Esophagus squamous epithelium (tissue), 5 donors: ENCODE measurements at regions of chr6 and their contacts with region 1.

Region 1: DNA sequence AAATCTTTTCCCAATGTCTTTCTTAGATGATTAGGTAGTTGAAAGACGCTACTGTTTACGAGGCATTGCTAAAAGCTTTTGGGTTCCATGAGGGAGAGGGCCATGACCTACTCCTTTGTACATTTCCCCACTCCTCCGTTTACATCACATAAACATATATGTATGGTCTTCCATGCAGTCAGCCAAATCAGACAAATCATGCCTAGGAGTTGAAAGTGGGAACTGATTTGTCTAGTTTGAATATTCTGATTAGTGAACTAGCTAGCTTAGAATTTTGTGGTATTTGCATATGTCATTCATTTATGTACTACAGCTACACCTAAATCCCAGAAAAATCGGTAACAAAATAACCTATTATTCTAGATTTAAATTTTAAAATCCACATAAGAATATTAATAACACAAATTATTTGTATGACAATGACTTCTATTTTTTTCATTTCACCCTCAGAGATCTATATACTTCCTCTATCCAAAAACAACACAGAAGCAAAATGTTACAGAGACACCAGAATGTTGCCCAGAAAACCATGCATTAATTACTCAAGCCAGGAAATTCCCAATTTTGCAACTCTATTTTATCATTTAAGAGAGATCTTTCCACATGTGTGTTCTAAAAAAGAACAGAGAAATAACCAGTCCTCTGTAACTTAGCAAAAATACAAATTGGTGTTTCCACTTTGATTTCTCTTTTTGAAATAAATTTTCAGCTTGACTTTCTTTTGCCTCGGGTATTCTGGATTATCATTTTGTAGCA is 231.9 kb downstream of the LAMA2 start:
- DNase-seq: no peak
- H3K4me3 ChIP-seq: no peak overlapping the region
- H3K27ac ChIP-seq: no peak overlapping the region
- H3K4me1 ChIP-seq: no peaks in the 10 kb centered on the region
- H3K27me3 ChIP-seq: no peaks in the 10 kb centered on the region
- CTCF ChIP-seq: no peak
- POLR2A ChIP-seq: no peak

Region 2: DNA sequence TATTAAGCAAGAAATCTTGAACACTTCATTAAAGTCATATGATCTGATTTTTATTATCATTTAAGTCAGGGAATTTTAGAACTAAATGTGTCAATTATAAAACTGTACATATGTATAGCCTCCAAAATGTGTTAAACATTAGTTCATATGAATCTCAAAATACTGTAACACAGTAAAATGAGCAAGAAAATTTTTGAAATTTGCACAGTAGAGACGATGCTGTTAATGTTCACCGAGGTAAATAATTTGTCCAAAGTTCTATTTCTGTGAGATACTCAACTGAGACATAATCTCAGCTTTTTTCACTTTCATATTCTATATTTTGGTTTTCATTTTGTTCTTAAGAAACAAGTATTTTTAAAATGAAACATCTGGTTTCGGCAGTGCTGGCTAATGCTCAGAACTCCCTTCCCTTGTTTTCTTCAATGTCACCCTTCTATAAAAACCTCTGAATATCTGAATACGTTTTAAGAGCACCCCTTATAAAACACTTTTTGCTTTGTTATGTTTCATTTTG is 121.2 kb after region 1 on chr6:
- intact Hi-C with region 1: no loop called
- DNase-seq: no peak
- H3K4me3 ChIP-seq: no peak overlapping the region
- H3K27ac ChIP-seq: no peak overlapping the region
- H3K4me1 ChIP-seq: no peaks in the 10 kb centered on the region
- H3K27me3 ChIP-seq: no peaks in the 10 kb centered on the region
- CTCF ChIP-seq: no peak
- POLR2A ChIP-seq: no peak

Region 3: DNA sequence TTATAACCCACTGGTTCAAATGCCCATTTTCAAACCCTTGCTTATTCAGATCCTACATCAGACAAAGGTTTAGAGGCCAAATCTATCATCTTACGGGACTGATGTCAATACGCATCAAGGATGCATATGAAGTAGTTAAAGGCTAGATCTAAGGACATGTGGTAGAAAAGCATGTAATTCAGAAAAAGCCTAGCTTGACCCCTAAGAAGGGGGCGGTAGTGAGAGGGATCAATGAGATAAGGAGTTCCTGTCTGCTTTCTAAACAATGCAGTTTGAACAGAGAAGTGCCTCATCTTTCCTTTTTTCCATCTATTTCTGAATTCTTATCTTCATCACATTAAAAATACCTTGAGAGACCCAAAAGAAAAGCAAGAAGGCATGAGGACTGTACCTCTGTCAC is 357.4 kb after region 1 on chr6:
- intact Hi-C with region 1: loop called (anchors 5 kb)
- DNase-seq: no peak
- H3K4me3 ChIP-seq: no peak overlapping the region
- H3K27ac ChIP-seq: no peak overlapping the region
- H3K4me1 ChIP-seq: no peaks in the 10 kb centered on the region
- H3K27me3 ChIP-seq: no peaks in the 10 kb centered on the region
- CTCF ChIP-seq: no peak
- POLR2A ChIP-seq: no peak